ENCODE measurements at regions of chr18 and their contacts with region 1.

Region 1: GRCh38 chr18:71784777-71785176 is 759.4 kb downstream of the CBLN2 start:
- DNase-seq: peak; percentile 10
- ATAC-seq: peak; percentile 56; the same call in 2 of the 3 replicates
- H3K4me3 ChIP-seq: no peak overlapping the region
- H3K27ac ChIP-seq: no peak overlapping the region
- H3K4me1 ChIP-seq: no peaks in the 10 kb centered on the region
- H3K27me3 ChIP-seq: no peaks in the 10 kb centered on the region
- CTCF ChIP-seq: peak; percentile 60
- EP300 ChIP-seq: no peak
- POLR2A ChIP-seq: no peak
- RAD21 ChIP-seq: no peak

Region 2: DNA sequence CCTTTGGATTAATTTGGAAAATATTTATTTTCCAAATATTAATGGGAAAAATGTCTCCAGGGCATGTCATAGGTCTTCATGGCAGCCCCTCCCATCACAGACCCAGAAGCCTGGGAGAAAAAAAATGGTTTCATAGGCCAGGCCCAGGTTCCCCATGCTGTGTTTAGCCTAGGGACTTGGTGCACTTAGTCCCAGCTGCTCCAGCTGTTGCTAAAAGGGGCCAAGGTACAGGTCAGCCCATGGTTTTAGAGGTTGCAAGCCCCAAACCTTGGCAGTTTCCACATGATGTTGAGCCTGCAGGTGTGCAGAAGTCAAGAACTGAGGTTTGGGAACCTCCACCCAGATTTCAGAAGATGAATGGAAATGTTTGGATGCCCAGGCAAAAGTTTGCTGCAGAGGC is 1186.4 kb before region 1 on chr18:
- CTCF ChIA-PET with region 1: no interaction called
- POLR2A ChIA-PET with region 1: no interaction called
- in situ Hi-C with region 1: no loop called
- intact Hi-C with region 1: loop called (anchors 2 kb)
- DNase-seq: no peak
- ATAC-seq: peak; percentile 38; the same call in 1 of the 3 replicates
- H3K4me3 ChIP-seq: no peak overlapping the region
- H3K27ac ChIP-seq: no peak overlapping the region
- H3K4me1 ChIP-seq: no peaks in the 10 kb centered on the region
- H3K27me3 ChIP-seq: no peaks in the 10 kb centered on the region
- CTCF ChIP-seq: no peak
- EP300 ChIP-seq: no peak
- POLR2A ChIP-seq: no peak
- RAD21 ChIP-seq: no peak